ENCODE measurements at regions of chrX and their contacts with region 1.

Region 1: GRCh38 chrX:78945186-78945912 is at the start of gene P2RY10:
- DNase-seq: peak; percentile 36
- H3K4me3 Mint-ChIP-seq: peak within 1 kb of the TSS; percentile 97
- H3K27ac Mint-ChIP-seq: peak within 1 kb of the TSS; percentile 97
- H3K4me1 Mint-ChIP-seq: peaks cover 42% of the 10 kb centered on the region
- H3K27me3 Mint-ChIP-seq: no peaks in the 10 kb centered on the region
- total RNA-seq, gene P2RY10: 86.8 to 89.1 TPM

Region 2: DNA sequence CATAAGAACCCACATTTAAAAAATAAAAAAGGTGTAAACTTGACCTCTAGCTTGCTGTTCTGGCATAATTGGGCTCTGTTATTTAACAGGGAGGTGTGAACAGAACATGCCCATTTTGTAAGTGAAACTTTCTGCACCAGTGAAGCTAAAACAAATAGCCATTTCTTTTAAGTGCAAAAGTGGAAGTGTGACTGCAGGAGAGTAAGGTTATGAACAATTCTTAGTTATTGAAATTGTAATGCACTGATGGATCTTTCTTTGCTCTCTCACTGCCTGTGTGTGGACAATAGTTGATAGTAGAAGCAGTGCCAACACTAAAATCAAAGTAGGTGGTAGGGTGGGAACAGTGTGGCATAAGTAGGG is 12.4 kb after region 1 on chrX:
- CTCF ChIA-PET with region 1: no interaction called
- POLR2A ChIA-PET with region 1: interaction called, 10 read pairs
- DNase-seq: no peak
- H3K4me3 Mint-ChIP-seq: no peak overlapping the region
- H3K27ac Mint-ChIP-seq: peak overlapping the region; percentile 31
- H3K4me1 Mint-ChIP-seq: peaks cover 70% of the 10 kb centered on the region
- H3K27me3 Mint-ChIP-seq: no peaks in the 10 kb centered on the region

Region 3: DNA sequence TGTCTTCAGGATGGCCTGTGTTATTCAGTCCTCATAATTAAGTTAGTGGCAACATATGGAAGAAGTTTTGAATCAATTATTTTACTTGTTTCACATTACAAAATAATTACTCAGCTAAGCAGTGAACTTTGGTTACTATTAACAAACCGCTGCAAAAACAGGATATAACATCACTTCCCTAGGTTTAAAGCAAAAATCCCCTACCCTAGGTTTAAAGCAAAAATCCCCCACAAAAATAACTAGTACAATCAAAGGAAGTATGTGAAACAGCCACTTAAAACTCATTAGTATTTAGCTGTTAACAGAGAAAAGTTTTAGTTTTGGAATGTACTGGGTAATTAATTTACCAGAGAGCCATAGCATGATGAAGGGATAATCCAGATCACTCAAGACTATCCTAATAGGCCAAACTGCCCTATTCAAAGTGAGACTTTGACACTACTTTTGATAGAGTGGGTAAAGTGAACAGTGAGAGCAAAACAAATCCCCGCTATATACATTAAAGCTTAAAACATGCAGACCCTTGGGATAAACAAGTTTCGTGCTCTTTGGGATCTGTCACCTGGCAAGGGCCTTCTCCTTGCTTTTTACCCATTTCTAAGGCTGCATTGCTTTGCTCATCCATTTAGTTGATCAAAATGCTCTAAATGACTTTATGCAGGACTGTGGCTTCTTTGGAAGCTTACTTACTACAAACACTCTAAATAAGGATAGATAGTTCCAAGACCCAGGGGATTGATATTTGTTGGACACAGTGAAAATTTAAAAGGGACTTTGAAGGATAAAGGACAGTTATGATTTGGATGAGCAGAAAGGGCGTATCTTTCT is 162.8 kb after region 1 on chrX:
- CTCF ChIA-PET with region 1: no interaction called
- POLR2A ChIA-PET with region 1: interaction called, 16 read pairs
- DNase-seq: no peak
- H3K4me3 Mint-ChIP-seq: peak overlapping the region; percentile 32
- H3K27ac Mint-ChIP-seq: peak overlapping the region; percentile 94
- H3K4me1 Mint-ChIP-seq: peaks cover 30% of the 10 kb centered on the region
- H3K27me3 Mint-ChIP-seq: no peaks in the 10 kb centered on the region

Region 4: GRCh38 chrX:79146640-79147390 is 201.5 kb after region 1 on chrX:
- CTCF ChIA-PET with region 1: no interaction called
- POLR2A ChIA-PET with region 1: interaction called, 26 read pairs
- DNase-seq: no peak
- H3K4me3 Mint-ChIP-seq: peak overlapping the region; percentile 96
- H3K27ac Mint-ChIP-seq: peak overlapping the region; percentile 78
- H3K4me1 Mint-ChIP-seq: peaks cover 43% of the 10 kb centered on the region
- H3K27me3 Mint-ChIP-seq: no peaks in the 10 kb centered on the region

Region 5: DNA sequence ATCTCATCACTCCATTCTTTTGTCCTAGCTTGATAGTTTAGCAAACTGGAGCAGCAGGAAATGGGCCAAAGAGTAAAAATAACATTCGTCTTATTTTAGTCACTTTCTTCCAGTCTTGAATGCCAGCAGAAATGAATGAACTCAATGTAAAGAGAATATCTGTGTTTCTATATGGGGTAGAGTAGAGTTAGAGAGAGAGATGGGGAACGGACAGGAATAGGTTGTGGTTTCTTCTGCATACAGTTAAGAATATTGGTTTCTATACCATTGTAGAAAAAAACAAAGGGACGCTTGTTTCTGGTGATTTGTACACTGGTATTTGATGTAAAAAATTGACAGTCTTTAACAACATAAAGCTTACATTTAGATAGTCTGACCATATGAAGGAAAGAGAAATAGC is 208.0 kb after region 1 on chrX:
- CTCF ChIA-PET with region 1: no interaction called
- POLR2A ChIA-PET with region 1: interaction called, 26 read pairs
- DNase-seq: no peak
- H3K4me3 Mint-ChIP-seq: peak overlapping the region; percentile 71
- H3K27ac Mint-ChIP-seq: peak overlapping the region; percentile 83
- H3K4me1 Mint-ChIP-seq: peaks cover 73% of the 10 kb centered on the region
- H3K27me3 Mint-ChIP-seq: no peaks in the 10 kb centered on the region

Region 6: GRCh38 chrX:79167462-79167861 is 222.1 kb after region 1 on chrX:
- CTCF ChIA-PET with region 1: no interaction called
- POLR2A ChIA-PET with region 1: interaction called, 11 read pairs
- DNase-seq: no peak
- H3K4me3 Mint-ChIP-seq: peak overlapping the region; percentile 57
- H3K27ac Mint-ChIP-seq: peak overlapping the region; percentile 77
- H3K4me1 Mint-ChIP-seq: peaks cover 90% of the 10 kb centered on the region
- H3K27me3 Mint-ChIP-seq: no peaks in the 10 kb centered on the region

Region 7: GRCh38 chrX:79366873-79367749 is 421.8 kb after region 1 on chrX and contains the start of gene ITM2A:
- CTCF ChIA-PET with region 1: no interaction called
- POLR2A ChIA-PET with region 1: interaction called, 16 read pairs
- DNase-seq: peak; percentile 62
- H3K4me3 Mint-ChIP-seq: peak within 1 kb of the TSS; percentile 94
- H3K27ac Mint-ChIP-seq: peak within 1 kb of the TSS; percentile 95
- H3K4me1 Mint-ChIP-seq: peaks cover 24% of the 10 kb centered on the region
- H3K27me3 Mint-ChIP-seq: no peaks in the 10 kb centered on the region
- total RNA-seq, gene ITM2A: 145 to 157 TPM